Activated CD8-positive, alpha-beta T cell treated with anti-CD3 and anti-CD28 coated beads for 36 hours (primary cell): ENCODE measurements at regions of chr1 and their contacts with region 1.

Region 1: GRCh38 chr1:103461161-103462105 is 64.1 kb upstream of the RNPC3 start:
- DNase-seq: no peak
- ATAC-seq: peak; percentile 51
- H3K4me3 Mint-ChIP-seq: no peak overlapping the region
- H3K27ac Mint-ChIP-seq: no peak overlapping the region
- H3K4me1 Mint-ChIP-seq: no peaks in the 10 kb centered on the region
- H3K27me3 Mint-ChIP-seq: no peaks in the 10 kb centered on the region
- CTCF ChIP-seq: peak; percentile 61

Region 2: GRCh38 chr1:103106426-103107341 is 354.7 kb before region 1 on chr1:
- CTCF ChIA-PET with region 1: interaction called, 11 read pairs
- POLR2A ChIA-PET with region 1: no interaction called
- intact Hi-C with region 1: loop called (anchors 5 kb)
- DNase-seq: peak; percentile 1
- ATAC-seq: no peak
- H3K4me3 Mint-ChIP-seq: no peak overlapping the region
- H3K27ac Mint-ChIP-seq: no peak overlapping the region
- H3K4me1 Mint-ChIP-seq: peaks cover 6% of the 10 kb centered on the region
- H3K27me3 Mint-ChIP-seq: peaks cover 17% of the 10 kb centered on the region
- CTCF ChIP-seq: peak; percentile 24

Region 3: DNA sequence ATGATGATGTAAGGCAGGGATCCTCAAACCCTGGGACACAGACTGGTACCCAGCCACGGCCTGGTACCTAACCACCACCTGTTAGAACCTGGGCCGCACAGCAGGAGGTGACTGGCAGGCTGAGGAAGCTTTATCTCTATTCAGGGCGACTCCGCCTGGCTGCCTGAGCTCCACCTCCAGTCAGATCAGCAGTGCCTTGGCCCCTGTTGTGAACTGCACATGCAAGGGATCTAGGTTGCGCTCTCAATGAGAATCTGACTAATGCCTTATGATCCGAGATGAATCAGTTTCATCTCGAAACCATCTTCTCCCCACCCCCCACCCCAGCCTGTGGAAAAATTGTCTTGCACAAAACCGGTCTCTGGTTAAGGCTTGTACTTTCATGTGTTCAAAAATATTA is 68.3 kb after region 1 on chr1:
- CTCF ChIA-PET with region 1: no interaction called
- POLR2A ChIA-PET with region 1: no interaction called
- intact Hi-C with region 1: no loop called
- DNase-seq: peak; percentile 68
- ATAC-seq: peak; percentile 47
- H3K4me3 Mint-ChIP-seq: no peak overlapping the region
- H3K27ac Mint-ChIP-seq: no peak overlapping the region
- H3K4me1 Mint-ChIP-seq: peaks cover 68% of the 10 kb centered on the region
- H3K27me3 Mint-ChIP-seq: no peaks in the 10 kb centered on the region
- CTCF ChIP-seq: no peak